Activated CD8-positive, alpha-beta T cell treated with anti-CD3 and anti-CD28 coated beads for 36 hours (primary cell): ENCODE measurements at regions of chr20 and their contacts with region 1.

Region 1: DNA sequence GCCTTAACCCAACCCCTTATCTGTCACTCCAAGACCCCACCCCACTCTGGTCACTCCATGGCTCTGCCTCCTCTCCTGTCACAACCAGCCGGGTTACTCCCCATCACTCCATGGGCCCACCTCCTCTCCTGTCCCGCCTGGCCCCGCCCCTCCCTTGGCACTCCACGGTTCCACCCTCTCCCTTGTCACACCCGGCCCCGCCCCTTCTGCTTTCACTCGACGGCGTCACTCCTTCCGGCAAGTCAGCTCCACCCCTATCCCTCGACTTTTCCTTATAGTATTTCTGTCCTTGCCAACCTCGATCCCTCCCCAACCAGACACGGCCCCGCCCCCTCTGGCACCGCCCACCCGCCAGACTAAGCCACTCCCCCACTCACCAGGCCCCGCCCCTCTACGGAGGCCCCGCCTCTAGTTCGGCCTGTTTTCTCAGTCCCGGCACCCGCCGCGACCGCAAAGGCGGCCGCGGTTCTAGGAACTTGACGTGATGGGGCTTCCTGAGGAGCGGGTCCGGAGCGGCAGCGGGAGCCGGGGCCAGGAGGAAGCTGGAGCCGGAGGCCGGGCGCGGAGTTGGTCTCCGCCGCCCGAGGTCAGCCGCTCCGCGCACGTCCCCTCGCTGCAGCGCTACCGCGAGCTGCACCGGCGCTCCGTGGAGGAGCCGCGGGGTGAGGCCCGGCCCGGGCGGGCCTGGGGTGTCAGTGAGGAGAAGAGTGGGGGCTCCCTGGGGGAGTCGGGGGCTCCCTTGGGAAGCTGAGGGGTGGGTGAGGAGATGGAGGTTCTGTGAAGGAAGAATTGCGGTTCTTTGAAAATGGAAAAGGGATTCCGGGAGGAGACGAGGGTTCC is at the start of gene ACSS2:
- DNase-seq: peak; percentile 99
- ATAC-seq: peak; percentile 89
- H3K4me3 Mint-ChIP-seq: peak within 1 kb of the TSS; percentile 68
- H3K27ac Mint-ChIP-seq: peak within 1 kb of the TSS; percentile 75
- H3K4me1 Mint-ChIP-seq: peaks cover 49% of the 10 kb centered on the region
- H3K27me3 Mint-ChIP-seq: no peaks in the 10 kb centered on the region
- CTCF ChIP-seq: no peak
- total RNA-seq, gene ACSS2: 14.2 to 14.3 TPM

Region 2: GRCh38 chr20:34849778-34850177 is 26.6 kb before region 1 on chr20:
- CTCF ChIA-PET with region 1: no interaction called
- POLR2A ChIA-PET with region 1: no interaction called
- intact Hi-C with region 1: no loop called
- DNase-seq: no peak
- ATAC-seq: no peak
- H3K4me3 Mint-ChIP-seq: no peak overlapping the region
- H3K27ac Mint-ChIP-seq: no peak overlapping the region
- H3K4me1 Mint-ChIP-seq: no peaks in the 10 kb centered on the region
- H3K27me3 Mint-ChIP-seq: no peaks in the 10 kb centered on the region
- CTCF ChIP-seq: no peak

Region 3: DNA sequence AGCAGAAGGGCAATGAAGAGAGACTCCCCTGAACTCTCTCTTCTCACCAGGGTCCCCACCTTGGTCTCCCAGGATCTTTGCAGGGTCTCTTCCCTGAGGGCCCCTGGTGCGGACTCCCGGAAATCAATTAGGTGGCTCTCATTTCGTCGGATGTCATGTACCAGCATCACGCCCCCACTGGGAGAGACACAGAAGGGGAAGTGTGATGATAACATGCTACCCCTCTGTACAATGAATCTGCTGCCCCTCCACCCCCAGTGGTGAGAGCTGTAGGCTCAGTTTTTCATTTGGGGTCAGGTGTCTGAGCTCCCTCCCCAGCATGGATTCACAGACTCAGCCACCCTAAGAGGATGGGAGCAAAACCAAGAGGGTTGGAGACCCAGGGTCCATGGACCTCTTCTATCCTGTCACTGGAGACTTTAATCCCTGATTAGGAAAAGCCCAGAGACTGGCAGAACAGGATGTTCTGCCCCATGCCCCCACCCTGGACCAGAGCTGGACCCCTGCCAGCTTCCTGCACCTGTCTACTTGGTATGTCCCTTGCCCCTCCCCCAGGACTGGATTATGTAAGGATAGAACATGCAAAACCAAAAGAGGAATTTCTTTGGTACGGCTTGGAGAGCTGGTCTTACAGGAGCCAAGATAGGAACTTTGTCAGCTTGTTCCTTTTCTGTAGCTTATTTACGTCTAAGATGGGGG is 14.8 kb before region 1 on chr20:
- CTCF ChIA-PET with region 1: interaction called, 19 read pairs
- POLR2A ChIA-PET with region 1: interaction called, 4 read pairs
- intact Hi-C with region 1: no loop called
- DNase-seq: no peak
- ATAC-seq: no peak
- H3K4me3 Mint-ChIP-seq: no peak overlapping the region
- H3K27ac Mint-ChIP-seq: no peak overlapping the region
- H3K4me1 Mint-ChIP-seq: no peaks in the 10 kb centered on the region
- H3K27me3 Mint-ChIP-seq: no peaks in the 10 kb centered on the region
- CTCF ChIP-seq: no peak

Region 4: DNA sequence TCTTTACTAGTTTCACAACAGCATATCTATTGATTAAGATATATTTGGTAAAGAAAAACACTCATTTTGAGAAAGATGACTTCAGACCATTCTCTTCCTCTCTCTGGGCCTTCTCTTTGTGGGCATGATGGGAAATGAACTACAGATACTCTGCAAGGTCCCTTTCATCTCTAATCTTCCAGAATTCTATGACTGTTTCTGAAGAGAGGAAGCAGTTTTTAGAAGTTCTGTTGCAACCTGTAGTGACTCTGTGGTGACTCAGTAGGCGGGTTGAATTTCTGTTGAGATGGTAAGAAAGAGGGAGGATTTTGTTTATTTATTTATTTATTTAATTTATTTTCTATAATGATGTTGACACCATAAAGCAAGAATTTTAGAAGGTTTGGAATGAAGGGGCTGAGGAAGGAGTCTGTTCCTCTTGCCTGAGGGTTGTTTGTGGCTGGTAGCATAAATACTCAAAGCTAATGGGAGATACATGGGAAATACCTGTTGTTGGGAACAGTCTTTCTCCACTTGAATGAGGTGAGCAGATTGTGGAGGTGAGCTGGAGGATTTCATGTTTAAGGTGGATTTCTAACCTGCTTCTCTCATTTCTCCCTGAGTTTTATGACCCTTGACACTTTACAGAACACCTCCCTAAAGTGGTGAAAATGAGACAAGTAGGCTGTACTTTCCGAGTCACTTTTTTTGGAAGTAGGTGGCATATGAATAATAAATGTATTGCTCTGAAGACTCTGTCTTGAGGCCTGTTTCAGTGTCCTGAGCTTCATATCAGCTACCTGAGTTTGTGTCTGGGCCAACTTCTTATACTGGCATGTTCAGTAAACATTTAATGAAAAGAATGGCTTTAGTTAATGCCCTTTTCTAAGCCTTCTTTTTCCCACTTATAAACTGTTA is 15.0 kb after region 1 on chr20:
- CTCF ChIA-PET with region 1: interaction called, 24 read pairs
- POLR2A ChIA-PET with region 1: interaction called, 12 read pairs
- intact Hi-C with region 1: no loop called
- DNase-seq: peak; percentile 58
- ATAC-seq: peak; percentile 95
- H3K4me3 Mint-ChIP-seq: no peak overlapping the region
- H3K27ac Mint-ChIP-seq: peak overlapping the region; percentile 74
- H3K4me1 Mint-ChIP-seq: peaks cover 33% of the 10 kb centered on the region
- H3K27me3 Mint-ChIP-seq: no peaks in the 10 kb centered on the region
- CTCF ChIP-seq: no peak

Region 5: DNA sequence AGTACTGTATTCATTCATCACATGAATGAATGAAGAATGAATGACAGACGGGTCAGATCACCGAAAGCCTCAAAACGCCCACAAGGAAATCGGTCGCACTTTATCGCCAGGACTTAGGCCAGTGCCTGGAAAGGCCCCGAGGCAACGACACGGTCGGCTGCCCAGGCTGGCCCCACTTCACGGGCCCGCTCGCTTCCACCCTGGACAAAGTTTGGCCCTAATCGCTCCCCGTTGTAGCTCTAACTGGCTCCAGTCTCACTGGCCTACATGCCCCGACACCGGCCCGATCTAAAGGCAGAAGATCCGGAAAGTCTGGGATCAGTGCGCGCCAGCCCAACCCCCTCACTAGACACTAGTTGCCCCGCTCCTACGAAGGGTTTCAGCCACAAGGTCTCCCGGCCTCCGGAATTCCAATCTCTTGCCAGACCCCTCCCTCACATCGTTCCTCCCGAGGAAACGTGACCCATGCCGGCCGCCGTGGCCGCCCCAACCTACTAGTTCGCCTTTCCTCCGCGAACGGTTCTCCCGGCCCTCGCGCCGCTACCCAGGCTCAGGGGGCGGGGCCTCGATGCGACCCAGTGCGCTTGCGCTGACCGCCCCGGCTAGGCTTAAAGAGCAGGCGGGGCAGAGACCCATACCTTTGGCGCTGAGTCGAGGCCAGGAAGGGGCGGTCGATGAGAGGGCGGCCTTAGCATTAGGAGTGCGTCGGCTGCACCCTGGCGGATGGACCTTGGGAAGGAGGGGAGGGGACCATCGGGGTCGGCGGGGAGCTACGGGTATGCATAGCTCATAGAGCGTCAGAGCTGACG is 79.1 kb after region 1 on chr20 and contains the starts of genes GSS and MYH7B:
- CTCF ChIA-PET with region 1: interaction called, 94 read pairs
- POLR2A ChIA-PET with region 1: interaction called, 8 read pairs
- intact Hi-C with region 1: loop called (anchors 2 kb)
- DNase-seq: peak; percentile 99
- ATAC-seq: peak; percentile 94
- H3K4me3 Mint-ChIP-seq: peak within 1 kb of the TSS; percentile 99
- H3K27ac Mint-ChIP-seq: peak within 1 kb of the TSS; percentile 97
- H3K4me1 Mint-ChIP-seq: peaks cover 26% of the 10 kb centered on the region
- H3K27me3 Mint-ChIP-seq: no peaks in the 10 kb centered on the region
- CTCF ChIP-seq: peak; percentile 45
- total RNA-seq, gene GSS: 50.9 to 52.7 TPM
- total RNA-seq, gene MYH7B: 0.22 to 0.38 TPM

Region 6: GRCh38 chr20:34968042-34968775 is 91.8 kb after region 1 on chr20:
- CTCF ChIA-PET with region 1: interaction called, 11 read pairs
- POLR2A ChIA-PET with region 1: no interaction called
- intact Hi-C with region 1: no loop called
- DNase-seq: no peak
- ATAC-seq: no peak
- H3K4me3 Mint-ChIP-seq: no peak overlapping the region
- H3K27ac Mint-ChIP-seq: no peak overlapping the region
- H3K4me1 Mint-ChIP-seq: no peaks in the 10 kb centered on the region
- H3K27me3 Mint-ChIP-seq: no peaks in the 10 kb centered on the region
- CTCF ChIP-seq: no peak

Region 7: GRCh38 chr20:34978092-34978744 is 101.8 kb after region 1 on chr20:
- CTCF ChIA-PET with region 1: no interaction called
- POLR2A ChIA-PET with region 1: no interaction called
- intact Hi-C with region 1: no loop called
- DNase-seq: no peak
- ATAC-seq: no peak
- H3K4me3 Mint-ChIP-seq: no peak overlapping the region
- H3K27ac Mint-ChIP-seq: no peak overlapping the region
- H3K4me1 Mint-ChIP-seq: no peaks in the 10 kb centered on the region
- H3K27me3 Mint-ChIP-seq: peaks cover 14% of the 10 kb centered on the region
- CTCF ChIP-seq: no peak